Dorsolateral prefrontal cortex (tissue), 120 donors: ENCODE measurements at regions of chr17 and their contacts with region 1.

Region 1: DNA sequence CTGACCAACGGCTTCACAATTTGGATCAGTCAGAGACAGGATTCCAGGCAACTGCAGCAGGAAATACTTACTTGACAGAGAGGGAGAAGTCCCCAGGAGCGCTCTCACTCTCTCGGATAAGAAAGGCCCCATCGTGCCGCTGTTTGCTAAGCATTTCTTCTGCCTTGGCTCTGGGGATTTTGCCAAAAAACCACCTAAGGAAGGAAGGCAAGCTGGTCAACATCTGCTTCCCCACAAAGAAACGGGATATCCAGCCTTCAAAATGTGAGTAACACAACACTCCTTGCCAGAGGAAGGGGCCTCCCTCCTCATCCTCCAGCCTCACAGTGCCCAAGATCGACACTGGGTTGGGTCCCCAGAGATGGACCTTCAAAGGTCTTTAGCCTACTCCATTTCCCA is 36.6 kb upstream of the SLC25A19 start:
- DNase-seq: no peak
- H3K4me3 ChIP-seq: no peak overlapping the region
- H3K27ac ChIP-seq: peak overlapping the region in 50 of 59 donors; percentile 3 to 79 (median 52)
- H3K27me3 ChIP-seq: no peaks in the 10 kb centered on the region
- CTCF ChIP-seq: no peak

Region 2: GRCh38 chr17:75261336-75262111 is 64.3 kb before region 1 on chr17 and contains the starts of genes GGA3 and MRPS7:
- intact Hi-C with region 1: no loop called
- DNase-seq: peak; percentile 92 to 96 (median 95)
- H3K4me3 ChIP-seq: peak within 1 kb of the TSS; percentile 69 to 100 (median 98)
- H3K27ac ChIP-seq: peak within 1 kb of the TSS; percentile 84 to 100 (median 98)
- H3K27me3 ChIP-seq: no peaks in the 10 kb centered on the region
- CTCF ChIP-seq: peak in 19 of 56 donors; percentile 7 to 55 (median 22)
- total RNA-seq, gene GGA3: 41.9 to 89.7 (median 60.2) TPM
- total RNA-seq, gene MRPS7: 33.7 to 71.4 (median 51.1) TPM

Region 3: DNA sequence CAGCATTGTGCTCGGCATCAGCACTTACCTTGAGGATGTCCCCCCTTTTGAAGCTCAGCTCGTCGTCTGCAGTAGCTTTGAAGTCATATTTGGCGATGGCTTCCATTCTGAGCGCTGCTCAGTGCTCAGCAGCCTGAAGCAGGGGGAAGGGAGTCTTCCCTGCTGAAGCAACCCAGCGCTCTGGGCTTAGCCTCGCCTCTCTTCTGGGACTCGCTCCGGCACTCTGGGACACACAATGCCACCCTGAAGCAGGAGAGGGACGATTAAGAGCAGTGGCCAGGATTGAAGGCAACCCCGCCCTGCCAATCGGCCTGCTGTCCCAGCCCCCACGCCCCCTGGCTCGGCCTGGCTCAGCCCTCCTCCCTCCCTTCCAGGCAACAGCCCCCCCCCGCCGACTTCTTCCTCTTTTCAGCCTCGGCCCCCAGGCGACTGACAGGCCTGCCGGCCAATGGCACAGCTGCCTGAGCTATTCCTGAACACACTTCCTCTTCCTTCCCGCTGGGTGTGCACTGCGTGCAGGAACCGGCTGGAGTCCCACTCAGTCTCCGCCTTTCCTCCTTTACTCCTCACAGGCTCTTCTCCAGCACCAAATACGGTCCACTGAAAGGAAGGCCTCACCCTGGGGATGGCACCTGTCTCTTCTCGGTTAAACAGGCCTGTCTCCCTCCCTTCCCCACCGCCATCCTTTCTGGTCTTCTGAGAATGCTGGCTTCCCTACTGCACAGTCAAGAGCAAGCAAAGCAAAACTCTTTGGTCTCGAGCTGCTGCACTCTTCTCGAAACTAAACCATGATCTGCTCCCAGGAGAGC is 67.9 kb after region 1 on chr17:
- intact Hi-C with region 1: loop called in 1 of 2 experiments (anchors 5 kb)
- DNase-seq: peak; percentile 98 to 99 (median 99)
- H3K4me3 ChIP-seq: peak overlapping the region; percentile 54 to 99 (median 77)
- H3K27ac ChIP-seq: peak overlapping the region; percentile 55 to 97 (median 91)
- H3K27me3 ChIP-seq: no peaks in the 10 kb centered on the region
- CTCF ChIP-seq: peak in 37 of 56 donors; percentile 4 to 52 (median 24)

Region 4: GRCh38 chr17:75524953-75525719 is 199.3 kb after region 1 on chr17 and contains the start of gene LLGL2:
- intact Hi-C with region 1: loop called in 1 of 2 experiments (anchors 5 kb)
- DNase-seq: peak in 5 of 10 donors; percentile 45 to 77 (median 67)
- H3K4me3 ChIP-seq: peak within 1 kb of the TSS; percentile 43 to 78 (median 66)
- H3K27ac ChIP-seq: peak within 1 kb of the TSS in 55 of 59 donors; percentile 20 to 87 (median 72)
- H3K27me3 ChIP-seq: peaks cover 0 to 4% (median 0%) of the 10 kb centered on the region in 45 donors
- CTCF ChIP-seq: peak in 55 of 56 donors; percentile 17 to 74 (median 53)
- total RNA-seq, gene LLGL2: 3.2 to 31.5 (median 10.6) TPM